Psoas muscle (tissue), 8 donors: ENCODE measurements at regions of chr4 and their contacts with region 1.

Region 1: GRCh38 chr4:48779998-48780742 is at the start of gene FRYL:
- DNase-seq: peak; percentile 100
- ATAC-seq: peak; percentile 93 to 96 (median 95)
- H3K4me3 ChIP-seq: peak within 1 kb of the TSS; percentile 98
- H3K27ac ChIP-seq: peak within 1 kb of the TSS; percentile 98
- H3K4me1 ChIP-seq: peaks cover 38% of the 10 kb centered on the region
- H3K27me3 ChIP-seq: no peaks in the 10 kb centered on the region
- CTCF ChIP-seq: no peak
- total RNA-seq, gene FRYL: 15.0 to 21.7 (median 20.9) TPM

Region 2: DNA sequence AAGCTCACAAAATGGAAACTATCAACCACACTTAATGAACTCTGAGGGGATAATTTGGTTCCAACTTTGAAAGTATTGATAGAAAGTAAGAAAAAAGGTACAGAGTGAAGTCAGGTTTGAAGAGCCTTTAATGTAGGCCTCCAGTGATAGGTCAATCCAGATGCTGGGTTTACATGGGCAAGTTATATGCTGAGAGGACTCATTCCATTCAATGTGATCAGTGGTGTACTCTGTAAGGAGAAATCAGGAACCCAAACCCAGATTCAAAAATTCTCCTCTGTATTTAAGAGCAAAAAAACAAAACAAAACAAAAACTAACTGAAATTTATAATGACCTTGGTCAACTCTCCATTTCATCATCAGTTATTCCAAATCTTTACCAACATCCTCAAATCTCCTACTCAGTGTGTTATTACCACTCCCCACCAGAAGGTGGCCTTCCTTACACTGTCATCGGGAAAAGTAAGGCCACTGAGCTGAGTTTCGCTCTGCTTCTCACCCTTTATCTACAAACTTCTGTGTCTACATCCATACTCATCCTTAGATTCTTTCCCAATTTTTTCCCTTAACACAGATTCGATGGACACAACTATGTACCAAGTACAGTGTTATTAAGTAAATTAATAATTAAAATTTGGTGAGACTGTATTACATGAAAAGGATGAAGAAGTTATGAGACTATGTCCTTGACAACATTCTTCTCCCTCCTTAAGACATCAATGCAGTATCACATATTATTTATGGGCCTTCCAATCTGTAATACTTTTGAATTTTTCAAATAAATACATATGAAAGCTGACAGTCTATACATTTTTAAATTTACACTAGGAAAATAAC is 201.8 kb before region 1 on chr4:
- intact Hi-C with region 1: loop called in 1 of 2 experiments (anchors 5 kb)
- DNase-seq: no peak
- ATAC-seq: peak; percentile 85 to 97 (median 90)
- H3K4me3 ChIP-seq: no peak overlapping the region
- H3K27ac ChIP-seq: no peak overlapping the region
- H3K4me1 ChIP-seq: no peaks in the 10 kb centered on the region
- H3K27me3 ChIP-seq: no peaks in the 10 kb centered on the region
- CTCF ChIP-seq: peak; percentile 94

Region 3: GRCh38 chr4:48668254-48669017 is 111.7 kb before region 1 on chr4:
- intact Hi-C with region 1: loop called in 1 of 2 experiments (anchors 10 kb)
- DNase-seq: no peak
- ATAC-seq: peak; percentile 76 to 94 (median 86)
- H3K4me3 ChIP-seq: no peak overlapping the region
- H3K27ac ChIP-seq: peak overlapping the region; percentile 84
- H3K4me1 ChIP-seq: peaks cover 39% of the 10 kb centered on the region
- H3K27me3 ChIP-seq: no peaks in the 10 kb centered on the region
- CTCF ChIP-seq: no peak

Region 4: GRCh38 chr4:48722509-48723446 is 57.4 kb before region 1 on chr4:
- intact Hi-C with region 1: loop called in 1 of 2 experiments (anchors 10 kb)
- DNase-seq: no peak
- ATAC-seq: no peak
- H3K4me3 ChIP-seq: no peak overlapping the region
- H3K27ac ChIP-seq: no peak overlapping the region
- H3K4me1 ChIP-seq: peaks cover 27% of the 10 kb centered on the region
- H3K27me3 ChIP-seq: no peaks in the 10 kb centered on the region
- CTCF ChIP-seq: no peak

Region 5: DNA sequence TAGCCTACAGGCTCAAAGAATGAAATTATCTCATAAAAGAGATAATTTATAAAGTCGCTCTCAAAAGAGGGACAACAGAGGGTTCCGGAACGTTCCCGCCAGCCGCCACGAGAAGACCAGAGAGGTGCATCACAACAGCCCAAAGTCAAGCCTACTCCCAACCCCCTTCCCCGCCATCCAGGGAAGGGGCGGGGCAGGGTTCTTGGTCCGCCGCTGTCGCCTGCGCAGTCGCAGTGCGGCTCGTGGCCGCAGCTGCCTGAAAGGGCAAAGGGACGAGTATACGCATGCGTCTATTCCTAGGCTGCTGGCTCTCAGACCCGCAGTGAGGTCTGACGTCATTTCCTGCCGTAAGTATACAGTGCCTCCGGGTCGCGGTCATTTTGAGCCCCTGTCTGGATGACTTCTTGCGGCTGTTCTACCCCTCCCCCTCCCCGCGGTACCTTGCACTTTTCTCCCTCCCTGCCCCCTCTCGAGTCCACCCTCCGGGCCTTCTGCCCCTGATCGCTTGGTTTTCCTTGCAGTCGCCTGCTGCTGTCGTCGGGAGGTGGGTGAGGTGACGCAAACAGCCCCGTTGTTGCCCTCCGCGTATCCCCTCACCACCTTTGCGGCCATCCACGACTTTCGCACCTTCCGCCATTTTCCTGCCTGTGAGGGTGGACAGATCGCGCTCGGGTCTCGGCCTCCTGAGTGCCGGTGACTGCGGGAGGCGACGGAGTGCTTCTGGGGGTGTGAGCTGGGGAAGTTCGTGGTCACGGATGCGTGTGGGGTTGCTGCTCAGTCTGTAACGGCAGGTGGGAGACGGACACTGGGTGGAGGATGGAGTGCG is 50.7 kb after region 1 on chr4 and contains the start of gene OCIAD1:
- intact Hi-C with region 1: loop called (anchors 1 to 2 kb)
- DNase-seq: peak; percentile 94 to 97
- ATAC-seq: peak; percentile 99 to 100 (median 100)
- H3K4me3 ChIP-seq: peak within 1 kb of the TSS; percentile 99
- H3K27ac ChIP-seq: peak within 1 kb of the TSS; percentile 99
- H3K4me1 ChIP-seq: peaks cover 11% of the 10 kb centered on the region
- H3K27me3 ChIP-seq: no peaks in the 10 kb centered on the region
- CTCF ChIP-seq: no peak
- total RNA-seq, gene OCIAD1: 118 to 160 (median 136) TPM

Region 6: DNA sequence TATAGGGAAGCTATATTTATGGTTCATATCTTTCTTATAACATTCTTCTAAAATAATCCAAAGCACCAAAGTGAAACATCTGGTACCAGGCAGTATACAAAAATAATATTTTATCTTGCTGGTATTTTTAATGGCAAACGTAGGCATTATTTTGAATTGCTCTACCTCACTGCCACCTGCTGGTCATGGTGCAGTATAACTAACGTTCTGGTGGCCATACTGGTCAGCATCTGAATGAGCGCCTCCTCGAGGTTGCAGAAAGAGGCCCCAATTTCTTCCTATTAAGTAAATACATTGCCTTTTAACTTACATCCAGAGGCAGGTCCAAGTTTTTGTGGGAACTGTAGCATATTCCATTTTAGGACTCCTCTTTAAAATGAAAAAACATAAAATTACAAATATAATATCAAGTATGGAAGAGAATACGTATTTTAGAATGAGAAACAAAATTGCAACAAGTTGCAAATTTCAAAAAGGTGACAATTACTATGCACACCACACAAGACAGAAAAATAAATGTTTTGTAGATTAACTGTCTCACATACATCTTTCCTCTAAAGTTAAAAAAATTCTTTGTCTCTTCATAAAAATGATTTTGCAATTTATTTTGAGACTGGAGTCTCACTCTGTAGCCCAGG is 183.0 kb after region 1 on chr4:
- intact Hi-C with region 1: loop called in 1 of 2 experiments (anchors 5 kb)
- DNase-seq: peak; percentile 31 to 62
- ATAC-seq: peak; percentile 74 to 92 (median 86)
- H3K4me3 ChIP-seq: no peak overlapping the region
- H3K27ac ChIP-seq: no peak overlapping the region
- H3K4me1 ChIP-seq: no peaks in the 10 kb centered on the region
- H3K27me3 ChIP-seq: no peaks in the 10 kb centered on the region
- CTCF ChIP-seq: peak; percentile 95